ENCODE measurements at regions of chr13 and their contacts with region 1.

Region 1: GRCh38 chr13:45393941-45394570 is 24.1 kb downstream of the SLC25A30 start:
- DNase-seq: peak; percentile 61
- ATAC-seq: peak; percentile 90
- H3K4me3 ChIP-seq: no peak overlapping the region
- H3K27ac ChIP-seq: peak overlapping the region; percentile 20
- H3K4me1 ChIP-seq: peaks cover 5% of the 10 kb centered on the region; the same call in 1 of the 2 replicates
- H3K27me3 ChIP-seq: no peaks in the 10 kb centered on the region
- CTCF ChIP-seq: peak; percentile 66
- EP300 ChIP-seq: no peak
- POLR2A ChIP-seq: no peak
- RAD21 ChIP-seq: no peak

Region 2: DNA sequence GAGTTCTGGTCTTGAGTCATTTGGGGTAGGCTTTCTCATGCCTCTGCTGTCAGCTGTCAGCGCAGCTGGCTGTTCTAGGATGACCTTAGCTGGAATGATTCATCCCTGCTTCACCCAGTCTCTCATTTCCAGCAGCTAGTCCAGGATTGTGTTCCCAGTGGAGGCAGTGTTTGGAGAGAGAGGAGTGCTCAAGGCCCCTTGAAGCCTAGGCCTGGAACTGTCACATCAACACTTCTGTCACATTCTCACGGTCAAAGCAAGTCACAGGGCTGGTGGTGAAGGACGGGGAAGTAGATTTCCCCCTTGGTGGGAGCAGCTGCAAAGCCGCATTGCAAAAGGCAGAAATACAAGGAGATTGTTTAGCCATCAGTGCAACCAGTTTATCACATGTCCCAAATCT is 68.2 kb before region 1 on chr13:
- CTCF ChIA-PET with region 1: no interaction called
- POLR2A ChIA-PET with region 1: no interaction called
- in situ Hi-C with region 1: no loop called
- intact Hi-C with region 1: loop called (anchors 5 kb)
- DNase-seq: peak; percentile 62
- ATAC-seq: peak; percentile 56
- H3K4me3 ChIP-seq: no peak overlapping the region
- H3K27ac ChIP-seq: no peak overlapping the region
- H3K4me1 ChIP-seq: peaks cover 46% of the 10 kb centered on the region
- H3K27me3 ChIP-seq: no peaks in the 10 kb centered on the region
- CTCF ChIP-seq: no peak
- EP300 ChIP-seq: no peak
- POLR2A ChIP-seq: no peak
- RAD21 ChIP-seq: no peak

Region 3: DNA sequence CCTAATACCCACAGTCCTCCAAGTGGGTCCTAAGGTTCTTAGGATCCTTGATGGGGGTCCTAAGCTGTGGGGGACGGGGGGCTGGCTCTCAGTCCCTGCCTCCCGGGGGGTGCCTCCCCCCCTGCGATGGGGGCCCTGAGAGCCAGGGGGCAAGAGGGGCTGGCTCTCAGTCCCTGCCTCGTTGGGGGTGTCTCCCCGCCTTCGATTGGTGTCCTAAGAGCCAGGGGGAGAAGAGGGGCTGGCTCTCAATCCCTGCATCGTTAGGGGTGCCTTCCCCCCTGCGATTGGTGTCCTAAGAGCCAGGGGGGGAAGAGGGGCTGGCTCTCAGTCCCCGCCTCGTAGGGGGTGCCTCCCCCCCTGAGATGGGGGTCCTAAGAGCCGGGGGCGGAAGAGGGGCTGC is 12.9 kb before region 1 on chr13:
- CTCF ChIA-PET with region 1: no interaction called
- POLR2A ChIA-PET with region 1: no interaction called
- in situ Hi-C with region 1: no loop called
- intact Hi-C with region 1: no loop called
- DNase-seq: no peak
- ATAC-seq: no peak
- H3K4me3 ChIP-seq: no peak overlapping the region
- H3K27ac ChIP-seq: no peak overlapping the region
- H3K4me1 ChIP-seq: peaks cover 9% of the 10 kb centered on the region
- H3K27me3 ChIP-seq: no peaks in the 10 kb centered on the region
- CTCF ChIP-seq: no peak
- EP300 ChIP-seq: no peak
- POLR2A ChIP-seq: no peak
- RAD21 ChIP-seq: no peak

Region 4: GRCh38 chr13:45473627-45474026 is 79.6 kb after region 1 on chr13:
- CTCF ChIA-PET with region 1: no interaction called
- POLR2A ChIA-PET with region 1: no interaction called
- in situ Hi-C with region 1: no loop called
- intact Hi-C with region 1: loop called (anchors 2 kb)
- DNase-seq: peak; percentile 43
- ATAC-seq: peak; percentile 96
- H3K4me3 ChIP-seq: no peak overlapping the region
- H3K27ac ChIP-seq: no peak overlapping the region
- H3K4me1 ChIP-seq: peaks cover 56% of the 10 kb centered on the region
- H3K27me3 ChIP-seq: no peaks in the 10 kb centered on the region
- CTCF ChIP-seq: peak; percentile 54
- EP300 ChIP-seq: no peak
- POLR2A ChIP-seq: no peak
- RAD21 ChIP-seq: peak; percentile 48; the same call in 1 of the 2 replicates

Region 5: GRCh38 chr13:45490068-45490467 is 96.0 kb after region 1 on chr13:
- CTCF ChIA-PET with region 1: interaction called, 5 read pairs
- POLR2A ChIA-PET with region 1: no interaction called
- in situ Hi-C with region 1: no loop called
- intact Hi-C with region 1: loop called (anchors 5 kb)
- DNase-seq: peak; percentile 25
- ATAC-seq: peak; percentile 85
- H3K4me3 ChIP-seq: no peak overlapping the region
- H3K27ac ChIP-seq: no peak overlapping the region
- H3K4me1 ChIP-seq: no peaks in the 10 kb centered on the region
- H3K27me3 ChIP-seq: no peaks in the 10 kb centered on the region; a peak in 1 of 5 replicates
- CTCF ChIP-seq: peak; percentile 55
- EP300 ChIP-seq: no peak
- POLR2A ChIP-seq: no peak
- RAD21 ChIP-seq: peak; percentile 49

Measured in HepG2 (cell line).